HepG2 (cell line): ENCODE measurements at regions of chr1 and their contacts with region 1.

Region 1: GRCh38 chr1:5975133-5975880 is 16.9 kb downstream of the NPHP4 start:
- DNase-seq: peak; percentile 49
- ATAC-seq: peak; percentile 85
- H3K4me3 ChIP-seq: no peak overlapping the region
- H3K27ac ChIP-seq: no peak overlapping the region
- H3K4me1 ChIP-seq: no peaks in the 10 kb centered on the region
- H3K27me3 ChIP-seq: no peaks in the 10 kb centered on the region
- CTCF ChIP-seq: peak; percentile 90
- EP300 ChIP-seq: no peak
- POLR2A ChIP-seq: no peak
- RAD21 ChIP-seq: peak; percentile 93

Region 2: DNA sequence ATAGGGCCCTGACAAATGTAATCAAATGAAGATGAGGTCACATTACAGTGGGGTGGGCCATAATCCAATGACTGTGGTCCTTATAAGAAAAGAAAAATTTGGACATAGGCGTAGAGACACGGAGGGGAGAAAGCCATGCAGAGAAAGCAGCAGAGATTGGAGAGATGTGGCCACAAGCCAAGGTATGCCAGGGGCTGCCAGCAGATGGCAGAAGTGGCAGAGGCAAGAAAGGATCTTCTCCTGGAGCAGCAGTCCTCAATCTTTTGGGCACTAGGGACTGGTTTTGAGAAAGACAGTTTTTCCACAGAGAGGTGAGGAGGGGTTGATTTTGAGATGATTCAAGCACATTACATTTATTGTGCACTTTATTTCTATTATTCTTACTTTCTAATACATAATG is 338.1 kb before region 1 on chr1:
- CTCF ChIA-PET with region 1: interaction called, 3 read pairs
- POLR2A ChIA-PET with region 1: no interaction called
- in situ Hi-C with region 1: loop called (anchors 5 kb)
- intact Hi-C with region 1: loop called (anchors 10 kb)
- DNase-seq: no peak
- ATAC-seq: no peak
- H3K4me3 ChIP-seq: no peak overlapping the region
- H3K27ac ChIP-seq: no peak overlapping the region
- H3K4me1 ChIP-seq: no peaks in the 10 kb centered on the region
- H3K27me3 ChIP-seq: peaks cover 0 to 5% of the 10 kb centered on the region in 2 experiments; a peak in 1 of 5 replicates
- CTCF ChIP-seq: peak; percentile 43
- EP300 ChIP-seq: no peak
- POLR2A ChIP-seq: no peak
- RAD21 ChIP-seq: no peak

Region 3: GRCh38 chr1:5745776-5746610 is 229.3 kb before region 1 on chr1:
- CTCF ChIA-PET with region 1: interaction called, 3 read pairs
- POLR2A ChIA-PET with region 1: no interaction called
- in situ Hi-C with region 1: loop called (anchors 10 kb)
- intact Hi-C with region 1: loop called (anchors 10 kb)
- DNase-seq: peak; percentile 52
- ATAC-seq: peak; percentile 91
- H3K4me3 ChIP-seq: no peak overlapping the region
- H3K27ac ChIP-seq: no peak overlapping the region
- H3K4me1 ChIP-seq: peaks cover 8% of the 10 kb centered on the region; the same call in 1 of the 2 replicates
- H3K27me3 ChIP-seq: peaks cover 3 to 65% of the 10 kb centered on the region in 2 experiments; a peak in 4 of 5 replicates
- CTCF ChIP-seq: peak; percentile 97
- EP300 ChIP-seq: no peak
- POLR2A ChIP-seq: no peak
- RAD21 ChIP-seq: peak; percentile 71

Region 4: DNA sequence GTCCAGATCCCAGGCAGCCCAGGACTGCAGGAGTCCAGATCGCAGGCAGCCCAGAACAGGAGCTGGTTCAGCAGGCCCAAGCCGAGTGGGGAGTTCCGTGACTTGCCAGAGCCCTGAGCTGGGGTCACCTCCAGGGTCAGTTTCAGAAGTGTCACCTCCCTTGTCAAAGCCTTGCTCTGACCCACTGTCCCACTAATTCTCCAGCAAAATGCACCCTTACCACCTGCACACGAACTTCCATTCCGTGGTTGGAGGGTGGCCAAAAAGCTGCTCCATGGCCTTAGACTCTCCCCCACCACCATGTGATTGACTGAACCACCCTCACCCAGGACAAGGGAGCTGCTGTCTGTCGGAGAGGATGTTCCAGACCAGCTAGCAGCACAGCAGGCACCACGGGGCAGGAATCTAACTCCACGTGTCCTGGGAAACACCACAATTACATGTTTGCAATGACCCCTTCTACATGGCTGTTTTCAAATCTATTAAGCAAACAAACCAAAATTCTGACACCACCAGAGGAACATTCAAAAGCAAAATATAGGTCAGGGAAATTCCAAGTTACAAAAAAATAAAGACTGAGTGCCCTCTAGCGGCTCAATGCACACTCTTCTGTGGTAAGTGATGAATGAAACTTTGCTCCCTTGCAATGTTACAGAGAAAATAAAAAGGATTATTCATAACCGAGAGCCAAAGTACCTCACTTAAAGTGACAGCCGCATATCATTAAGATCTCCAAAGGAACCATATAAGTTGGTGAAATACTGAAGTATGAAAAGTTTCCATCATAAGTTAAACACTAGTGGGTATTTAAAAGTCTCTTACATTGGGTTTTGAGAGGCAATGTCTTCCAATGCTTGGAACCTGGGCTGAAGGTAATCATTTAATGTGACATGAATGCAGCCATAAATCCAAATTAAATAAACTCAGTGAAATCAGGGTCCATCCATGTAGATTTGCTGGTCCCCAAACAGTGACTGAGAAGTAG is 59.4 kb before region 1 on chr1:
- CTCF ChIA-PET with region 1: interaction called, 15 read pairs
- POLR2A ChIA-PET with region 1: no interaction called
- in situ Hi-C with region 1: no loop called
- intact Hi-C with region 1: loop called (anchors 2 kb)
- DNase-seq: peak; percentile 30
- ATAC-seq: peak; percentile 81
- H3K4me3 ChIP-seq: no peak overlapping the region
- H3K27ac ChIP-seq: no peak overlapping the region
- H3K4me1 ChIP-seq: peaks cover 27% of the 10 kb centered on the region
- H3K27me3 ChIP-seq: no peaks in the 10 kb centered on the region
- CTCF ChIP-seq: peak; percentile 67
- EP300 ChIP-seq: no peak
- POLR2A ChIP-seq: no peak
- RAD21 ChIP-seq: no peak

Region 5: GRCh38 chr1:6041432-6042062 is 66.2 kb after region 1 on chr1:
- CTCF ChIA-PET with region 1: no interaction called
- POLR2A ChIA-PET with region 1: no interaction called
- in situ Hi-C with region 1: no loop called
- intact Hi-C with region 1: no loop called
- DNase-seq: no peak
- ATAC-seq: peak; percentile 56; the same call in 2 of the 3 replicates
- H3K4me3 ChIP-seq: no peak overlapping the region
- H3K27ac ChIP-seq: no peak overlapping the region
- H3K4me1 ChIP-seq: peaks cover 21% of the 10 kb centered on the region
- H3K27me3 ChIP-seq: no peaks in the 10 kb centered on the region
- CTCF ChIP-seq: peak; percentile 83
- EP300 ChIP-seq: no peak
- POLR2A ChIP-seq: no peak
- RAD21 ChIP-seq: no peak